AG04450 (cell line): ENCODE measurements at regions of chr17 and their contacts with region 1.

Region 1: GRCh38 chr17:55527540-55528118 is 16.4 kb upstream of the SMIM36 start:
- DNase-seq: peak; percentile 44
- H3K4me3 ChIP-seq: no peak overlapping the region
- H3K27ac ChIP-seq: no peak overlapping the region
- H3K27me3 ChIP-seq: no peaks in the 10 kb centered on the region
- CTCF ChIP-seq: peak; percentile 81

Region 2: GRCh38 chr17:54840885-54841591 is 686.6 kb before region 1 on chr17:
- CTCF ChIA-PET with region 1: no interaction called
- POLR2A ChIA-PET with region 1: no interaction called
- DNase-seq: no peak
- H3K4me3 ChIP-seq: no peak overlapping the region
- H3K27ac ChIP-seq: no peak overlapping the region
- H3K27me3 ChIP-seq: no peaks in the 10 kb centered on the region
- CTCF ChIP-seq: no peak

Region 3: GRCh38 chr17:55540414-55541091 is 12.9 kb after region 1 on chr17:
- CTCF ChIA-PET with region 1: interaction called, 17 read pairs
- POLR2A ChIA-PET with region 1: interaction called, 4 read pairs
- DNase-seq: no peak
- H3K4me3 ChIP-seq: no peak overlapping the region
- H3K27ac ChIP-seq: no peak overlapping the region
- H3K27me3 ChIP-seq: no peaks in the 10 kb centered on the region
- CTCF ChIP-seq: no peak

Region 4: GRCh38 chr17:55587608-55588139 is 60.0 kb after region 1 on chr17:
- CTCF ChIA-PET with region 1: interaction called, 32 read pairs
- POLR2A ChIA-PET with region 1: no interaction called
- DNase-seq: no peak
- H3K4me3 ChIP-seq: no peak overlapping the region
- H3K27ac ChIP-seq: peak overlapping the region; percentile 4
- H3K27me3 ChIP-seq: no peaks in the 10 kb centered on the region
- CTCF ChIP-seq: no peak

Region 5: DNA sequence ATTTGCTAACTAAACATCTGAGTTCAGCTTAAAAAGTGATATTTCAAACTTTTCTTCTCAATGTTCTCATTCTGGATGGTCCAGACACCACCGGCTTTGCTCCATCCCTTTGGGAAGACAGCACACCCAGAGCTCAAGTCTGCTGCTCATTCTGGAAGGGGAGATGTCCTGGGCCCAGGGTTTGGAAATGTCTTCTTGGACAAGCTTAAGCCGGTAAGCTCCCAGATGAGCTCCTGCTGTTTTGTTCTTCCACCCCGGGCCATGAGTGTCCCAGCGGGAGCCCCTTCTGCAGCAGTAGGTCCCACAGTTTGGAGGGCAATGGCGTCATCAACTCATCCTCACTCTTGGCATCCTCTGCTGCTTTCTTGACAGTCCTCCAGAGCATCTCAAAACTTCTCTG is 89.8 kb after region 1 on chr17:
- CTCF ChIA-PET with region 1: interaction called, 49 read pairs
- POLR2A ChIA-PET with region 1: no interaction called
- DNase-seq: no peak
- H3K4me3 ChIP-seq: no peak overlapping the region
- H3K27ac ChIP-seq: no peak overlapping the region
- H3K27me3 ChIP-seq: no peaks in the 10 kb centered on the region
- CTCF ChIP-seq: no peak

Region 6: GRCh38 chr17:55705849-55706248 is 178.2 kb after region 1 on chr17:
- CTCF ChIA-PET with region 1: interaction called, 18 read pairs
- POLR2A ChIA-PET with region 1: no interaction called
- DNase-seq: no peak
- H3K4me3 ChIP-seq: no peak overlapping the region
- H3K27ac ChIP-seq: no peak overlapping the region
- H3K27me3 ChIP-seq: no peaks in the 10 kb centered on the region
- CTCF ChIP-seq: no peak

Region 7: GRCh38 chr17:55735731-55736405 is 208.2 kb after region 1 on chr17:
- CTCF ChIA-PET with region 1: interaction called, 35 read pairs
- POLR2A ChIA-PET with region 1: interaction called, 3 read pairs
- DNase-seq: no peak
- H3K4me3 ChIP-seq: no peak overlapping the region
- H3K27ac ChIP-seq: no peak overlapping the region
- H3K27me3 ChIP-seq: no peaks in the 10 kb centered on the region
- CTCF ChIP-seq: peak; percentile 79

Region 8: DNA sequence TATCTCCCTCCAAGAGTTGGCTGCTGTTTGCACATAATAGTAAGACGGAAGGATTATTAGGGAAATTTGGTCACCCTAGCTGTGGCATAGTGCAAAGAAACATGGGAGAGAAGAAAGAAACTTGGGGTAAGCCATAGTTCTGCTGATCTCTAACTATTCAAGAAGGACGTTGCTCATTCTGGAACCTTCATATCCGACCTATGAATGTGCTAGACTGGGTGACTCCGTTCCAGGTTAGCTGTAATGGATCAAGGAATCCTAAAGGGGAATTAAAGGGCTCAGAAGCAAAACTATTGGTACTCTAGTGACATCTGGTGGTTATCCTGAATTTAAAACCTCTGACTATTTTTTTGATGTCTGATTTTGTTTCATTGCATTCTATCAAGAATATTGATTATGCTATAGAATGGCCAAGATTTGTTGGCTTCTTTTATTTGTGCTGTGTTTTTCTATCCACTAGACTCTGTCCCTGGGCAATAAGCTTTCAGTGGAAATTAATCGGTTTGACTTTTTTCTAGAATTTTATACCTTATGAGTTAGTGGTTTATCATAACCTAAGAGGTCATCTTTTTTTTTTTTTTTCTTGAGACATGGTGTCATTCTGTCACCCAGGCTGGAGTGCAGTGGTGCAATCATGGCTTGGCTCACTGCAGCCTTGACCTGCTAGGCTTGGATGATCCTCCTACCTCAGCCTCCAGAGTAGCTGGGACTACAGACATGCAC is 242.7 kb after region 1 on chr17:
- CTCF ChIA-PET with region 1: interaction called, 242 read pairs
- POLR2A ChIA-PET with region 1: no interaction called
- DNase-seq: peak; percentile 29
- H3K4me3 ChIP-seq: no peak overlapping the region
- H3K27ac ChIP-seq: peak overlapping the region; percentile 78
- H3K27me3 ChIP-seq: no peaks in the 10 kb centered on the region
- CTCF ChIP-seq: peak; percentile 61